ENCODE measurements at regions of chr5 and their contacts with region 1.

Region 1: DNA sequence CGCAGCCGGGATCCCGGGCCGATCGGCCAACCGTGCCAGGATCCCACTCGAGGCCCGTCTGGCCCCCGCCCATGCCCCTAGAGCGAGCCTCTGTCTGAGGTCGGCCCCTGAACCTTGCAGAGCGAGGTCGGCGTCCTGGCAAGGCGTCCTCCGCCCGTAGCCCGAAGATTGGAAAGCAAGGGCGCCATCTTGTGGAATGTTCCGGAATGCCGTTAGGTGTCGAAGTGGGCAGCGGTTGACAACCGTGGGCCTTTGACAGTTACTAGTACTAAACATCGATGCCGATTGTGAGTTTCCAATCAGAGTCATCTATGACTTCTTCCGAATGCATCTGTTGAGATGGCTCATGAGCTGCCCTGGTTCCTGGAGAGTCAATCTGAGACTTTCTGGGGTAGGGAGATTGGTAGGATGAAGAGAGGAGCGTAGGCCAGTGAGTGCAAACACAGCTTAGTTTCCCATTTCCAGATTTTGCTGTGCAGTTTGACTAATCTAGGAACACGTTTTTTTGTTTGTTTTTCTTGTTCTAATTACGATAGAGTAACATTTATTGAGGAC is 923 bp upstream of the PLK2 start:
- DNase-seq: peak; percentile 79 to 91
- H3K4me3 ChIP-seq: peak overlapping the region; percentile 90
- H3K27ac ChIP-seq: peak overlapping the region; percentile 96
- H3K4me1 ChIP-seq: peaks cover 14% of the 10 kb centered on the region
- H3K27me3 ChIP-seq: no peaks in the 10 kb centered on the region
- CTCF ChIP-seq: peak; percentile 83

Region 2: GRCh38 chr5:57383093-57383861 is 1077.5 kb before region 1 on chr5:
- CTCF ChIA-PET with region 1: no interaction called
- POLR2A ChIA-PET with region 1: no interaction called
- intact Hi-C with region 1: loop called (anchors 2 kb)
- DNase-seq: peak; percentile 62 to 89
- H3K4me3 ChIP-seq: no peak overlapping the region; the same call in 1 of the 2 replicates
- H3K27ac ChIP-seq: peak overlapping the region; percentile 84
- H3K4me1 ChIP-seq: peaks cover 30% of the 10 kb centered on the region
- H3K27me3 ChIP-seq: no peaks in the 10 kb centered on the region
- CTCF ChIP-seq: no peak

Region 3: DNA sequence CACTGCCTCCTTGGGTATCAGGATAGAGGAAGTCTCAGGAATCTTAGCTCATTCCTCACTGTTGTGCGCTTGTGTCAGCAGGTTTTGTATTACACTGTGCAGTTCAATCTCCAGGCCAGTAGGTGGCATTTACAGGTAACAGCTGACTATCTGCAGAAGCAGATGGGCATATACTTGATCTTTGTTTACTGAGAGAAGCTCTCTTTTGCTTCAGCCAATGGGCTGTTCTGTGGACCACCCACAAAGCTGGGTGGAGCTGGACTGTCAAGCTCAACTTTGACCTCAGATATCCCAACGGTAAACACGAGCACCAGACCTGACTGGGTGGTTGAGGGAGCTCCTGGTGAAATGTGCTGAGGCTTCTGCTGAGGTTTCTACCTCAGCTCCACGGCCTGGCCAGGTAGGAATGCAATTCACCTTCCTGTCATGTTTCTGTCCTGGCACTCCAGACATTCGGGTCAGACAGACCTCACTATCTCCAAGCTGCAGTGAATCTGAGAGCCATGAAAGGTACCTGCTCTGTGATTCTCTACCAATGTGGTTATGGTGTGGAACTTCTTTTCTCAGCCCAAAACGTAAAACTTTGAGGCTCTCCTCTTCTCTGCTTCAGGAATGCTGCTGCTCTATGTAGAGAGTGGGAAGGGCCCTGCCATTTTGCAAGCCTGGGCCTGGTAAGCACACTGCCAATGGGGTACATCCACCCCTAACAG is 810.3 kb before region 1 on chr5:
- CTCF ChIA-PET with region 1: interaction called, 8 read pairs
- POLR2A ChIA-PET with region 1: interaction called, 4 read pairs
- intact Hi-C with region 1: loop called (anchors 1 kb)
- DNase-seq: peak in 1 of 2 experiments; percentile 70
- H3K4me3 ChIP-seq: no peak overlapping the region
- H3K27ac ChIP-seq: no peak overlapping the region
- H3K4me1 ChIP-seq: no peaks in the 10 kb centered on the region
- H3K27me3 ChIP-seq: no peaks in the 10 kb centered on the region
- CTCF ChIP-seq: peak; percentile 59

Region 4: GRCh38 chr5:57834829-57835608 is 625.8 kb before region 1 on chr5:
- CTCF ChIA-PET with region 1: no interaction called
- POLR2A ChIA-PET with region 1: interaction called, 17 read pairs
- intact Hi-C with region 1: loop called (anchors 1 kb)
- DNase-seq: no peak
- H3K4me3 ChIP-seq: no peak overlapping the region
- H3K27ac ChIP-seq: no peak overlapping the region
- H3K4me1 ChIP-seq: peaks cover 30% of the 10 kb centered on the region
- H3K27me3 ChIP-seq: no peaks in the 10 kb centered on the region
- CTCF ChIP-seq: no peak

Region 5: GRCh38 chr5:57862457-57862911 is 598.3 kb before region 1 on chr5:
- CTCF ChIA-PET with region 1: no interaction called
- POLR2A ChIA-PET with region 1: no interaction called
- intact Hi-C with region 1: loop called (anchors 1 kb)
- DNase-seq: peak; percentile 69 to 97
- H3K4me3 ChIP-seq: no peak overlapping the region
- H3K27ac ChIP-seq: peak overlapping the region; percentile 99
- H3K4me1 ChIP-seq: peaks cover 31% of the 10 kb centered on the region
- H3K27me3 ChIP-seq: no peaks in the 10 kb centered on the region
- CTCF ChIP-seq: no peak